OCI-LY7 (cell line): ENCODE measurements at regions of chr7 and their contacts with region 1.

Region 1: DNA sequence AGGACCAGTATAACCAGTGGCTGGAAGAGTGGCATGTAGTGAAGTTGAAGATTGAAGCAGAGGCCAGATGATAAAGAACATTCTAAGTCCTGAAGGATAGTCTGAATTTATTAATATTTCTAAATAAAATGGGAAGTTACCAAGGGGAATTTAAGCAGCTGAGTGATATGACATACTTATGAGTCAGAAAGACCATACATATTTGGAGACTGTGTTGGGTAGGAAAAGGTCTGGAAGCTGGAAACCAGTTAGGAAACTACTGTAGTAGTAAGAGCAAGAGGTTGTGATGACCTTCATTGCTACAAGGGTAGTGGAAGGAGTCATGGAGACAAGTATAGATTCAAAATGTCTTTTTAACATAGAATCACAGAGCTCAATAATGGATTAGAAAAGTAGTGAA is 752.3 kb downstream of the SUGCT start:
- DNase-seq: no peak
- H3K4me3 ChIP-seq: no peak overlapping the region
- H3K27ac ChIP-seq: no peak overlapping the region
- H3K4me1 ChIP-seq: no peaks in the 10 kb centered on the region
- CTCF ChIP-seq: no peak

Region 2: GRCh38 chr7:40899651-40900507 is 12.8 kb after region 1 on chr7:
- CTCF ChIA-PET with region 1: no interaction called
- POLR2A ChIA-PET with region 1: no interaction called
- intact Hi-C with region 1: loop called (anchors 1 kb)
- DNase-seq: no peak
- H3K4me3 ChIP-seq: no peak overlapping the region
- H3K27ac ChIP-seq: no peak overlapping the region
- H3K4me1 ChIP-seq: no peaks in the 10 kb centered on the region
- CTCF ChIP-seq: no peak